H1 (cell line): ENCODE measurements at regions of chr1 and their contacts with region 1.

Region 1: GRCh38 chr1:150650199-150650598 is 20.8 kb upstream of the ENSA start:
- DNase-seq: no peak
- H3K4me3 ChIP-seq: no peak overlapping the region
- H3K27ac ChIP-seq: no peak overlapping the region
- H3K4me1 ChIP-seq: peaks cover 0 to 4% (median 2%) of the 10 kb centered on the region in 4 experiments; a peak in 3 of 7 replicates
- H3K27me3 ChIP-seq: no peaks in the 10 kb centered on the region
- CTCF ChIP-seq: no peak
- EP300 ChIP-seq: no peak
- POLR2A ChIP-seq: peak in 1 of 2 experiments; percentile 38; a peak in 1 of 3 replicates
- RAD21 ChIP-seq: no peak

Region 2: GRCh38 chr1:150567717-150568593 is 82.2 kb before region 1 on chr1:
- CTCF ChIA-PET with region 1: no interaction called
- POLR2A ChIA-PET with region 1: interaction called, 13 read pairs
- DNase-seq: peak; percentile 81 to 88
- H3K4me3 ChIP-seq: peak overlapping the region; percentile 5 to 51 (median 37); a peak in 7 of 8 replicates
- H3K27ac ChIP-seq: peak overlapping the region; percentile 95
- H3K4me1 ChIP-seq: peaks cover 23 to 38% (median 23%) of the 10 kb centered on the region in 4 experiments
- H3K27me3 ChIP-seq: no peaks in the 10 kb centered on the region
- CTCF ChIP-seq: no peak; a peak in 1 of 4 replicates
- EP300 ChIP-seq: peak in 1 of 2 experiments; percentile 90; a peak in 1 of 3 replicates
- POLR2A ChIP-seq: peak; percentile 33 to 86; a peak in 2 of 3 replicates
- RAD21 ChIP-seq: peak; percentile 12 to 25; a peak in 3 of 4 replicates

Region 3: GRCh38 chr1:150572918-150573647 is 77.1 kb before region 1 on chr1:
- CTCF ChIA-PET with region 1: no interaction called
- POLR2A ChIA-PET with region 1: interaction called, 13 read pairs
- DNase-seq: no peak
- H3K4me3 ChIP-seq: peak overlapping the region in 2 of 4 experiments; percentile 8 to 12; a peak in 2 of 8 replicates
- H3K27ac ChIP-seq: no peak overlapping the region; the same call in 1 of the 2 replicates
- H3K4me1 ChIP-seq: peaks cover 14 to 31% (median 18%) of the 10 kb centered on the region in 4 experiments; a peak in 6 of 7 replicates
- H3K27me3 ChIP-seq: no peaks in the 10 kb centered on the region
- CTCF ChIP-seq: no peak
- EP300 ChIP-seq: no peak
- POLR2A ChIP-seq: peak; percentile 69 to 72
- RAD21 ChIP-seq: no peak

Region 4: DNA sequence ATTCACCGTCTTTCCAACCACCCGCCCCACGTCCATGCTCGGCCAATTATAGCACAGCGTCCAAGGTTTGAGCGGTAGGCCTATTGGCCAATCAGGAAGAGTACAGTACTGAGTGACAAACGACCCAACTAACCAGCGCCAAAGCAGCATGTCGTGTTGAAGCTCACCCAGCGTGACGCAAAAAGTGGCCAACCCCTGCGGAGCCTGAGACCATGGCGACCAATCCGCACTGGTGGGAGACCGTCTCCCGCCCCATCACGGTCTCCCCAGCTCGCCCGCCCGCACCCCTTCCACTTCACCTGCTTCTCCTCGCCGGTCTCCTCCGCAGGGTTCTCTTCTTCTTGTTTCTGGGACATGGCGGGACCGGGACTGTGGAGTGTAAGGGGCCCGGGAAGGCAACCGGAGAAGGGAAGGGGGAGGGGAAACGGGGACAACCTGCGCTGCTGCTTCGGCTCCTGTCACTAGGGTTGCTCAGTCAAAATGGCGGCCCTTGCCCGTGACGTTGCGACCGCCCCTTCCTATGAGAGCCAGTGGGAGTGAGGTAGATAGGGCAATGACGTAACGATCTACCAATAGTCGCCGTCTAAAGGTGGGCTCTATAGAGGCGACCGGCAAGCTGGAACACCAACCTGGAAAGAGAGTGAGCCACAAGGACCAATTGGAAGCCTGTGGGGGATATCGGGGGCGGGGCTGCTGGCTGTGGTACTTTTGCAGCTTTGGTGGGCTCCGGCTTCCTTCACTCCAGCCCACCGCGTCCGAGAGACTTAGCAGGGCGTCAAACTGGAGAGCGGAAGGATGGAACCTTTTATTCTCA is 20.9 kb before region 1 on chr1 and contains the start of gene ENSA:
- CTCF ChIA-PET with region 1: interaction called, 7 read pairs
- POLR2A ChIA-PET with region 1: interaction called, 163 read pairs
- DNase-seq: peak; percentile 94 to 96
- H3K4me3 ChIP-seq: peak within 1 kb of the TSS; percentile 72 to 94 (median 80)
- H3K27ac ChIP-seq: peak within 1 kb of the TSS; percentile 97
- H3K4me1 ChIP-seq: peaks cover 0 to 7% (median 4%) of the 10 kb centered on the region in 4 experiments; a peak in 5 of 7 replicates
- H3K27me3 ChIP-seq: no peaks in the 10 kb centered on the region
- CTCF ChIP-seq: no peak
- EP300 ChIP-seq: no peak
- POLR2A ChIP-seq: peak; percentile 62 to 66
- RAD21 ChIP-seq: no peak
- total RNA-seq, gene ENSA: 229 and 236 TPM in 2 replicates